ENCODE measurements at regions of chr4 and their contacts with region 1.

Region 1: DNA sequence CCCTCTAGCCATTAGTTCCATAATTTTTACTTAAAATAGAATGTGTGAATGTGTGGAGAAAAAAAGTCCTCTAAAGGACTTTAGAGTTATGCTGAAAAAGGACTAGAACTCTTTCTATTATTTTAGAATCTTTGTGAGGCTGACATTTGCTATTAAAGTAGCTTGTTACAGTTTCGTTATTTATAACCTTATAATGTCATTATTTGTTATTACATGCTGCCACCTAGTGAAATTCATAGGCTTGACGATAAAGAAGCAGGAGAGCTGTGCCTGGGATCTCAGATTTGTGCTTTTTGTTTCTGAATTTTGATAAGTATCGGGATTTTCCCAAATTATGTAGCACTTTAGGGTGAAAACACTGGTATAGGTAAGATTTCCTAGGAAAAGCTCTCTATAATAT is 38.5 kb upstream of the TAPT1 start:
- DNase-seq: no peak
- ATAC-seq: peak; percentile 66 to 77
- H3K4me3 ChIP-seq: no peak overlapping the region
- H3K27ac ChIP-seq: no peak overlapping the region
- H3K4me1 ChIP-seq: no peaks in the 10 kb centered on the region
- H3K27me3 ChIP-seq: no peaks in the 10 kb centered on the region

Region 2: GRCh38 chr4:16026160-16026761 is 238.5 kb before region 1 on chr4:
- intact Hi-C with region 1: loop called (anchors 2 to 5 kb)
- DNase-seq: no peak
- ATAC-seq: no peak
- H3K4me3 ChIP-seq: no peak overlapping the region
- H3K27ac ChIP-seq: no peak overlapping the region
- H3K4me1 ChIP-seq: no peaks in the 10 kb centered on the region
- H3K27me3 ChIP-seq: no peaks in the 10 kb centered on the region

Region 3: DNA sequence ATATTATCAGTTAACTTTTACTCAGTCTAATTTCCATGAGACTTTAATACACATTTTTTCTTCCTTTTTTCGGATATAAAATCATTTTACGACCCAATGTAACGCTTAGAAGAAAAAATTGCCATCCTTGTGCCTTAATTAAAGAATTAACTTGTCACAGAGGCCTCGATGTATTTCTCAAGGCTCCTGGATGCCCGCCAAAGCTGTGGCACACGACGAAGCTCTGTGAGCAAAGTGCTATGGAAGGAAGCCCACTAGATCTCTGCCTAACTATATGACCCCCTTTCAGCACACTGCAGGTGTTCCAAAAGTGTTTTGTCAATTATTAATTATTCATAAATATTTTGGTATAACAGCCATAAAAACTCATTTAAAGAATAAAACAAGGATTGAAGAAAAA is 93.0 kb before region 1 on chr4:
- intact Hi-C with region 1: no loop called
- DNase-seq: peak in 1 of 3 donors; percentile 53
- ATAC-seq: no peak
- H3K4me3 ChIP-seq: no peak overlapping the region
- H3K27ac ChIP-seq: no peak overlapping the region
- H3K4me1 ChIP-seq: no peaks in the 10 kb centered on the region
- H3K27me3 ChIP-seq: no peaks in the 10 kb centered on the region

Region 4: GRCh38 chr4:16196478-16197393 is 68.1 kb before region 1 on chr4:
- intact Hi-C with region 1: loop called in 2 of 4 experiments (anchors 2 to 10 kb)
- DNase-seq: no peak
- ATAC-seq: peak; percentile 90
- H3K4me3 ChIP-seq: peak overlapping the region; percentile 55
- H3K27ac ChIP-seq: no peak overlapping the region
- H3K4me1 ChIP-seq: peaks cover 5% of the 10 kb centered on the region
- H3K27me3 ChIP-seq: no peaks in the 10 kb centered on the region

Region 5: DNA sequence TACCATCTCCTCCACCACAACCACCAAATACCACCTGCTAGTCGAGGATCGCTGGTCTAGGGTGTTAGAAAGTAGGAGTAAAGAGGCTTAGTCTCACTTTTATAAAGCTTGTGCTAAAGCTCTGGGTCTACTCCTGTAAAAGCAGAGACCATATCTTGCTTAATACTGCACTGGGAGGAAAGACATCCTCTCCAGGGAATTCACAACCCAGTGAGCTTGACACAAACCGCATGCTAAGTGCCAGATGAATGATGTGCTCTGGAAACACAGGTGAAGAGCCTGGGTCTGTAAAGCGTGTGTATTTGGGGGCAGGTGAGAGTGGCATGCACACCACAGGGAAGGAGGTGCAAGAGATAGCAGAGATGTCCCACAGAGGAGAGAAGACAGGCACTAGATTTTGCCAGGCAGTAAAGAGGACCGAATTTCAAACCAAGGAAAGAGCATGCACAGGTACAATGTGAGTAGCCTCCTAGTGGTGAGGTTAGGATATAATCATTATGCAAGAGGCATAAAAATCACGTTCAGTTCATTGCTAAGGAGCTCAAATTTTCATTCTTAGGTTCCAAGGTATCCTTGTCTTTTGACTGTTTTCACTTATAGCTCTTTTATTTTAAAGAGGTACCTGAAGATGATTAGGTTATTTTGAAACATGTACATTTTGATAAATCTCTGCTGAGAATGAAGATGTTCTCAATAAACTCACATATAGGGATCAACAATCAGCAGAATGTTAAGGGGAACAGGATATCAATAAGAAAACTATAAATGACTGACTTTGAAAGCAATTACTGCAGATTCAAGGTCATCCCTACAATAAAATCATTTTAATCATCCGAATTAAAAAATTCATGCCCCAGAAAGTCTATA is 59.3 kb before region 1 on chr4:
- intact Hi-C with region 1: loop called in 1 of 4 experiments (anchors 10 kb)
- DNase-seq: no peak
- ATAC-seq: peak; percentile 34 to 59
- H3K4me3 ChIP-seq: no peak overlapping the region
- H3K27ac ChIP-seq: no peak overlapping the region
- H3K4me1 ChIP-seq: peaks cover 8% of the 10 kb centered on the region
- H3K27me3 ChIP-seq: no peaks in the 10 kb centered on the region

Measured in right cardiac atrium (tissue), 5 donors.